T-cell (primary cell): ENCODE measurements at regions of chr4 and their contacts with region 1.

Region 1: GRCh38 chr4:182717788-182718583 is 199.2 kb downstream of the DCTD start:
- DNase-seq: no peak
- ATAC-seq: no peak
- H3K4me3 ChIP-seq: no peak overlapping the region
- H3K4me3 Mint-ChIP-seq: no peak overlapping the region
- H3K27ac ChIP-seq: no peak overlapping the region
- H3K27ac Mint-ChIP-seq: no peak overlapping the region
- H3K4me1 ChIP-seq: no peaks in the 10 kb centered on the region
- H3K4me1 Mint-ChIP-seq: no peaks in the 10 kb centered on the region
- H3K27me3 ChIP-seq: peaks cover 0 to 3% of the 10 kb centered on the region in 2 experiments
- H3K27me3 Mint-ChIP-seq: peaks cover 0 to 7% of the 10 kb centered on the region in 2 donors

Region 2: GRCh38 chr4:182369211-182369610 is 348.8 kb before region 1 on chr4:
- CTCF ChIA-PET with region 1: interaction called in 1 of 2 experiments, 10 read pairs
- POLR2A ChIA-PET with region 1: no interaction called
- DNase-seq: no peak
- ATAC-seq: no peak
- H3K4me3 ChIP-seq: no peak overlapping the region
- H3K4me3 Mint-ChIP-seq: no peak overlapping the region
- H3K27ac ChIP-seq: no peak overlapping the region
- H3K27ac Mint-ChIP-seq: no peak overlapping the region
- H3K4me1 ChIP-seq: no peaks in the 10 kb centered on the region
- H3K4me1 Mint-ChIP-seq: no peaks in the 10 kb centered on the region
- H3K27me3 ChIP-seq: no peaks in the 10 kb centered on the region
- H3K27me3 Mint-ChIP-seq: peaks cover 6% of the 10 kb centered on the region in 2 donors